HEK293T (cell line): ENCODE measurements at regions of chr20 and their contacts with region 1.

Region 1: GRCh38 chr20:32779500-32780211 is 17.5 kb downstream of the DNMT3B start:
- DNase-seq: no peak

Region 2: GRCh38 chr20:32626859-32627636 is 152.6 kb before region 1 on chr20:
- CTCF ChIA-PET with region 1: no interaction called
- POLR2A ChIA-PET with region 1: no interaction called
- DNase-seq: no peak

Region 3: DNA sequence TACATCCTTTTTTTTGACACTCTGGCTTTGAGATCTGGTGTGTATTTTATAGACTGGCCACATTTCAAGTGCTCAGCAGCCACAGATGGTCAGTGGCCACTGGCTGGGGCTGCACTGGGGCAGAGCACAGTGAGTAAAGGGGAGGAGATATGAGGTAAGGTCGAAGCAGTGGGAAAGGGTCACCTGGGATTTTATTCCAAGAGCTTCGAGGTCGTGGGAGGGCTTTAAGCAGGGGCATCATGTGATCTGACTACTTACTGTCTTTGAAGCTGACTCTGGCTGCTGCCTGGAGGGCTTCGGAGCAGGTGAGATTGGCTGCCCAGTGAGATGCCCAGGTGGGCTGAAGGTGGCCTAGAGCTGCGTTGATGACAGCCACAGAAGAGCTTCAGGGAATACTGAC is 112.6 kb before region 1 on chr20:
- CTCF ChIA-PET with region 1: interaction called, 68 read pairs
- POLR2A ChIA-PET with region 1: no interaction called
- DNase-seq: no peak

Region 4: GRCh38 chr20:32674362-32674789 is 105.3 kb before region 1 on chr20:
- CTCF ChIA-PET with region 1: interaction called, 68 read pairs
- POLR2A ChIA-PET with region 1: interaction called, 4 read pairs
- DNase-seq: peak; percentile 68

Region 5: DNA sequence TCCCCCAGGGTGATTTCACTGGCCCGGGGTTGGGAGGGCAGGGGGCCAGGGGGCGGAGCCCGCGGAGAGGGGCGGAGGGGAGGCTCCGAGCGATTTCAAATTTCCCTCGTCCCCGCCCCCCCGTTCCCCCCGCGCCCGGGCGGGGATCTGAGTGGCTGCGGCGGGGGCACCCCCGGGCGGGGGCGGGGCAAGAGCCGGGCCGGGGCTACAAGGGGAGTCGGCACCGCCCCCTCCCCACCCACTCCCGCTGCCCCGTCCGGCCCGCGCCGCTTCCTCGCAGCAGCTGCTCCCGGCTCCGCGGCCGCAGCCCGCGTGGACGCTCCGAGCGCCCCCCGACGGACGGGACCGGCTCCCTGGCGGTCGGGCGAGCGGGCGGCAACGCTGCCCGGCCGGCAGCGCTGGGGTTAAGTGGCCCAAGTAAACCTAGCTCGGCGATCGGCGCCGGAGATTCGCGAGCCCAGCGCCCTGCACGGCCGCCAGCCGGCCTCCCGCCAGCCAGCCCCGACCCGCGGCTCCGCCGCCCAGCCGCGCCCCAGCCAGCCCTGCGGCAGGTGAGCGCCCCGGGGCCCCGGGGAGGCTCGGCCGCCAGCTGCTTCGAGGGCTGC is 17.4 kb before region 1 on chr20 and contains the start of gene DNMT3B:
- CTCF ChIA-PET with region 1: interaction called, 15 read pairs
- POLR2A ChIA-PET with region 1: interaction called, 6 read pairs
- DNase-seq: peak; percentile 84